Activated CD4-positive, alpha-beta memory T cell treated with anti-CD3 and anti-CD28 coated beads for 36 hours (primary cell): ENCODE measurements at regions of chr6 and their contacts with region 1.

Region 1: GRCh38 chr6:30541515-30542403 is 14.5 kb downstream of the GNL1 start:
- DNase-seq: peak; percentile 88
- H3K4me3 Mint-ChIP-seq: peak overlapping the region; percentile 63
- H3K27ac Mint-ChIP-seq: peak overlapping the region; percentile 50
- H3K4me1 Mint-ChIP-seq: peaks cover 36% of the 10 kb centered on the region
- H3K27me3 Mint-ChIP-seq: no peaks in the 10 kb centered on the region

Region 2: GRCh38 chr6:29426655-29427054 is 1115.1 kb before region 1 on chr6:
- CTCF ChIA-PET with region 1: no interaction called
- POLR2A ChIA-PET with region 1: no interaction called
- intact Hi-C with region 1: no loop called
- DNase-seq: no peak
- H3K4me3 Mint-ChIP-seq: no peak overlapping the region
- H3K27ac Mint-ChIP-seq: no peak overlapping the region
- H3K4me1 Mint-ChIP-seq: no peaks in the 10 kb centered on the region
- H3K27me3 Mint-ChIP-seq: peaks cover 33% of the 10 kb centered on the region

Region 3: GRCh38 chr6:30287139-30287538 is 254.6 kb before region 1 on chr6:
- CTCF ChIA-PET with region 1: no interaction called
- POLR2A ChIA-PET with region 1: no interaction called
- intact Hi-C with region 1: no loop called
- DNase-seq: no peak
- H3K4me3 Mint-ChIP-seq: no peak overlapping the region
- H3K27ac Mint-ChIP-seq: no peak overlapping the region
- H3K4me1 Mint-ChIP-seq: no peaks in the 10 kb centered on the region
- H3K27me3 Mint-ChIP-seq: no peaks in the 10 kb centered on the region

Region 4: DNA sequence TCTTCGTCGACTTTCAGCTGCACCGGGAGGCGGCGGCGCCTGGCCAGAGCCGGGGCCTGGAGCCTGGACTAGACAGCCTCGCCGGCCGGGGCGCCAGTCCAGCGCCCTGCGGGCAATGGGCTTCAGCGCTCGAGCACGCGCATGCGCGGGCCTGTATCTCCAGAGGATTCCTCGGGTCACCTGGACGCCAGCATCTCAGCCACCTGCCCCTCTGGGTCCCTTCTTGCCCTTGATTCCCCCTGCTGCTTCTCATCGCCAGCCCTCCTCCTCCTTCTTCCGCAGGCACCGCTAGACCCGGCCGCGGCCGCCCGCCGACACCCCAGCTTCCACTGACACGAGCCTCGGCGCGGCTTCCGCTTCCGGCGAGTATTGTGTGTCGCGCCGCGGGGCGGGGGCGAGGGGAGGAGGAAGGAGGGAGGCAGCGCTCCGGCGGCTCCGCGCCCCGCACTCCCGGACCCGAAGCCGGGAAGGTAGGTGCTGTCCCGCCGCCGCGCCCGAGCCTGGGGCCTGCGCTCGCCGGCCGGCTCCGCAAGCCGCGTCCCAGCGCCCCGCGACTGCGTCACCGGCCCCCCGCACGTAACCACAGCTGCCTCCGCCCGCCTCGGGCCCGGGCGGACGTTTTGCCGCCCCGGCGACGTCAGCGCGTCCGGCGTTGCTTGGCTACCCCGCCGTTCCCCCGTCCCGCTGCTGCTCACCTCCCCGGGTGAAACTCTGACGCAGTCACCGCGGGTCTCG is 215.1 kb before region 1 on chr6 and contains the start of gene TRIM39:
- CTCF ChIA-PET with region 1: no interaction called
- POLR2A ChIA-PET with region 1: no interaction called
- intact Hi-C with region 1: no loop called
- DNase-seq: peak; percentile 90
- H3K4me3 Mint-ChIP-seq: peak within 1 kb of the TSS; percentile 93
- H3K27ac Mint-ChIP-seq: peak within 1 kb of the TSS; percentile 94
- H3K4me1 Mint-ChIP-seq: peaks cover 51% of the 10 kb centered on the region
- H3K27me3 Mint-ChIP-seq: no peaks in the 10 kb centered on the region
- total RNA-seq, gene TRIM39: 13.7 to 15.6 TPM

Region 5: GRCh38 chr6:30483677-30484279 is 58.0 kb before region 1 on chr6:
- CTCF ChIA-PET with region 1: interaction called, 446 read pairs
- POLR2A ChIA-PET with region 1: interaction called, 11 read pairs
- intact Hi-C with region 1: loop called (anchors 1 kb)
- DNase-seq: no peak
- H3K4me3 Mint-ChIP-seq: no peak overlapping the region
- H3K27ac Mint-ChIP-seq: no peak overlapping the region
- H3K4me1 Mint-ChIP-seq: peaks cover 34% of the 10 kb centered on the region
- H3K27me3 Mint-ChIP-seq: peaks cover 29% of the 10 kb centered on the region

Region 6: GRCh38 chr6:30508890-30509736 is 32.6 kb before region 1 on chr6:
- CTCF ChIA-PET with region 1: interaction called, 29 read pairs
- POLR2A ChIA-PET with region 1: interaction called, 6 read pairs
- intact Hi-C with region 1: no loop called
- DNase-seq: peak; percentile 46
- H3K4me3 Mint-ChIP-seq: peak overlapping the region; percentile 31
- H3K27ac Mint-ChIP-seq: peak overlapping the region; percentile 86
- H3K4me1 Mint-ChIP-seq: peaks cover 55% of the 10 kb centered on the region
- H3K27me3 Mint-ChIP-seq: no peaks in the 10 kb centered on the region

Region 7: GRCh38 chr6:30565772-30566171 is 24.0 kb after region 1 on chr6:
- CTCF ChIA-PET with region 1: interaction called, 10 read pairs
- POLR2A ChIA-PET with region 1: no interaction called
- intact Hi-C with region 1: no loop called
- DNase-seq: no peak
- H3K4me3 Mint-ChIP-seq: no peak overlapping the region
- H3K27ac Mint-ChIP-seq: no peak overlapping the region
- H3K4me1 Mint-ChIP-seq: peaks cover 27% of the 10 kb centered on the region
- H3K27me3 Mint-ChIP-seq: no peaks in the 10 kb centered on the region

Region 8: DNA sequence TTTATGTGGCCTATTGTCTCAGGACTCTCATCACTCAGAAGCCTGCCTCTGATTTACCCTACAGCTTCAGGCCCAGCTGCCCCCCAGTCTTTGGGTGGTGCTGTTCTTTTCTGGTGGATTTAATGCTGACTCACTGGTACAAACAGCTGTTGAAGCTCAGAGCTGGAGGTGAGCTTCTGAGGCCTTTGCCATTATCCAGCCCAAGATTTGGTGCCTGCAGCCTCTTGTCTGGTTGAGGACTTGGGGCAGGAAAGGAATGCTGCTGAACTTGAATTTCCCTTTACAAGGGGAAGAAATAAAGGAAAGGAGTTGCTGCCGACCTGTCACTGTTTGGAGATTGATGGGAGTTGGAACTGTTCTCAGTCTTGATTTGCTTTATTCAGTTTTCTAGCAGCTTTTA is 49.2 kb after region 1 on chr6:
- CTCF ChIA-PET with region 1: interaction called, 78 read pairs
- POLR2A ChIA-PET with region 1: no interaction called
- intact Hi-C with region 1: loop called (anchors 2 kb)
- DNase-seq: no peak
- H3K4me3 Mint-ChIP-seq: no peak overlapping the region
- H3K27ac Mint-ChIP-seq: no peak overlapping the region
- H3K4me1 Mint-ChIP-seq: no peaks in the 10 kb centered on the region
- H3K27me3 Mint-ChIP-seq: no peaks in the 10 kb centered on the region

Region 9: GRCh38 chr6:30640476-30640875 is 98.7 kb after region 1 on chr6:
- CTCF ChIA-PET with region 1: no interaction called
- POLR2A ChIA-PET with region 1: no interaction called
- intact Hi-C with region 1: no loop called
- DNase-seq: no peak
- H3K4me3 Mint-ChIP-seq: no peak overlapping the region
- H3K27ac Mint-ChIP-seq: no peak overlapping the region
- H3K4me1 Mint-ChIP-seq: peaks cover 5% of the 10 kb centered on the region
- H3K27me3 Mint-ChIP-seq: no peaks in the 10 kb centered on the region

Region 10: DNA sequence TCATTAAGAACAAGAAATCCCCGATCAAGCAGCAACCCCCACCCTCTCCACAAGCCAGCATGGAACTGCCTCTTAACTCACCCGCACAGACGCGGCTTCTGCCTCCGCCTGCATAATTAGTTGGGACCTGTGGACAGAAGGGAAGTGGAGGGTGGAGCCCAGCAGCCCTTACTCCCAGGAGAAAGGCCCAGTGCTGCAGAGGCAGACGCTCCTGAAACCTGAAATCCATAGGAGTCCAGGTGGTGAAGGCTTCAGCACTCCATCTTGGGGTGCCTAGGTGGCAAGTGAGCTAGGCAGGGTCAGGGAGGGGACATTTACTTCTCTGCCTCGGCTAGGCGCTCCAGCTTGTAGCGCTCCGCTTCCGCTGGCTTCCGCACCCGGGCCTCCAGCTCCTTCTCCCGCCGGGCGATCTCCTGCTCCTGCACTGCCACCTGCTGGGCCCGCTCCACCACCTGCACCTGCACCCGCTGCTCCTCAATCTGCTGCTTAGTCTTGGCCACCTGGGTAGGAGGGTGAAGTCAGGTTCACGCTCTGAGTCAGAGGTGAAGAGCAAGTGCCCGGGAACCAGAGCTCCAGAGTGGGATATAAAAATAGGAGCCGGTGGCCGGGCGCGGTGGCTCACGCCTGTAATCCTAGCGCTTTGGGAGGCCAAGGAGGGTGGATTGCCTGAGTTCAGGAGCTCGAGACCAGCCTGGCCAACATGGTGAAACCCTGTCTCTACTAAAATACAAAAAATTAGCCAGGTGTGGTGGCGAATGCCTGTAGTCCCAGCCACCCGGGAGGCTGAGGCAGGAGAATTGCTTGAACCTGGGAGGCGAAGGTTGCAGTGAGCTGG is 189.1 kb after region 1 on chr6:
- CTCF ChIA-PET with region 1: interaction called, 12 read pairs
- POLR2A ChIA-PET with region 1: interaction called, 3 read pairs
- intact Hi-C with region 1: no loop called
- DNase-seq: peak; percentile 93
- H3K4me3 Mint-ChIP-seq: peak overlapping the region; percentile 10
- H3K27ac Mint-ChIP-seq: peak overlapping the region; percentile 56
- H3K4me1 Mint-ChIP-seq: peaks cover 39% of the 10 kb centered on the region
- H3K27me3 Mint-ChIP-seq: no peaks in the 10 kb centered on the region